ENCODE measurements at regions of chr6 and their contacts with region 1.

Region 1: DNA sequence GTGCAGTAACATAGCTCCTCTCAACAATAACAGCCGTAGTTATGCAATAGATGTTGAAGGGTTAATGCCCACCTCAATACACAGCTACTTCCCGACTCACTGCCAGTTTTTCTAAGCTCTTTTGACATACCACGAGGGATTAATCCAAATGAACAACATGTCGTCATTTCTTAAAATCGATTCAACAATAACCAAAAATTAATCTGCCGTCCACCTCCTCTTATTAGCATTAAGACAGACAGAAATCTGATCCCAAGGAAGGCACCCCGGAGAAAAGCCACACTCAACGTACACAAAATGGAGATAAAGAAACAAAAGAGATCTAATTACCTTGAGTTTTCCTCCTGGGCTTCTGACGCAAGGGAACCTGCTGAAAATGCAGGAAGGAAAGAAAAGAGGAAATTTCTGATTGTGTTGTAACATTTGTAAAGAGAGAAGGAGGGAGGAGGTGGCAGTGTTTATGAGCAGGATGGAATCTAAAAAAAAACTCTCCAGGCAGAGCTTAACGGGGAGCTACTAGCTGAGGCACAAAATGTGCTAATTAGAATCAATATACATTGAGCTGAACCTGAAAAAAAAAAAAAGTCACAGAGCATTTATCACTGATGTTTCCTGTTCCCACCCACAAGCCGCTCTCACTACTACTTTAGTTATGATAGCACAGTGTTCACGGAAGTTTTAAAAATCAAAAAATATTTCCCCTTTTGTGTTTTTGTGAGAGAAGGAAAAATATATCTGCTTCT is 109.3 kb downstream of the IPCEF1 start:
- DNase-seq: no peak
- CTCF ChIP-seq: no peak

Region 2: GRCh38 chr6:154258064-154258757 is 10.9 kb after region 1 on chr6:
- CTCF ChIA-PET with region 1: interaction called, 11 read pairs
- POLR2A ChIA-PET with region 1: no interaction called
- DNase-seq: peak; percentile 27
- CTCF ChIP-seq: no peak

Region 3: DNA sequence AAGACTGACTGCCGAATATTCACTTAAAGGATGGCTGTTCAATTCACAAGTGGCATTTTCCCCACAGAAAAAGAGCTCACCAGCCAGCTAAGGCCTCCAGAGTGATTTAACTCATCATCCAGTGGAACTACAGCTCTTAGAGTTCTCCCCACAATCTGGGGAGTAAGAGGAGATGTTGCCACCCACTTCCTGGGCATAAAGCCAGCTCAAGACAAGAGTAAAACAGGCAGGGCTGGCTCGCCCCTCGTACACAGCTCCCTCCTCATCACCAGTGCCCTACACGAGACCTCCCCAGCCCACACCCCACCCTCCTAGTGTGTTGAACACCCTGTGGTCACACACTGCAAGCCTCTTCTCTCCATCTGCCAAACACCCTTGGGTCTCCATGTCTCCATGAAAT is 156.5 kb after region 1 on chr6:
- CTCF ChIA-PET with region 1: no interaction called
- POLR2A ChIA-PET with region 1: no interaction called
- DNase-seq: no peak
- CTCF ChIP-seq: no peak

Measured in GM10248 (cell line).